B cell (primary cell): ENCODE measurements at regions of chr10 and their contacts with region 1.

Region 1: DNA sequence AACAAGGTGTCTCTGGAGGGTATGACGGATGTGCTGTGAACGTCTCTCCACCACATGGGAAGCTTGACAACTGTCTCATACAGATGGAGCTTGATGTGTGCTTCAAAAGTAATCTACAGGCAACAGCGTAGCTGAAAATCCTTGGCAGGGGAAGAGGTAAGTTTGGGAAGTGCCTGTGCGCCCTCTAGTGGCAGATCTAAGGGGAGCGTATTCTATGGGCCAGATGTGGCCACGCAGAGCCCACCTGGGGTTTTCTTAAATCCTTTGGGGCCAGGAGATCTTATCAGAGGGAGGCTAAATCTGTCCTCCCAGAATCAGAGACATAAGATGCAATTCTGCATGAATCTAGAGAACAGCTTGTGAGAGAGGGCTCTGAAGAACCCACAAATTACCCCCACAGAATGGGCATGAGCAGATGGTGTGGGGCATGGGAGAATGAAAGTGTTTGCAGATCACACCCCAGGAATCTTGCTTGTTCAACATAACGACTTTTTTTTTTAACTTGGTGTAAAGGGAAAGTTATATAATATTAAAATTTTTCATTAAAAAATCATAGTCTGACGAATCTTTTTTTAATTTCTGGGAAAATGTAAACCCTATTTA is 91.2 kb upstream of the MPP7 start:
- DNase-seq: peak; percentile 73
- ATAC-seq: peak; percentile 66
- H3K4me3 ChIP-seq: no peak overlapping the region
- H3K4me3 Mint-ChIP-seq: no peak overlapping the region
- H3K27ac ChIP-seq: no peak overlapping the region
- H3K27ac Mint-ChIP-seq: no peak overlapping the region
- H3K4me1 ChIP-seq: peaks cover 0 to 5% of the 10 kb centered on the region in 2 donors
- H3K4me1 Mint-ChIP-seq: peaks cover 4% of the 10 kb centered on the region
- H3K27me3 ChIP-seq: no peaks in the 10 kb centered on the region
- H3K27me3 Mint-ChIP-seq: peaks cover 4% of the 10 kb centered on the region
- CTCF ChIP-seq: peak; percentile 97

Region 2: DNA sequence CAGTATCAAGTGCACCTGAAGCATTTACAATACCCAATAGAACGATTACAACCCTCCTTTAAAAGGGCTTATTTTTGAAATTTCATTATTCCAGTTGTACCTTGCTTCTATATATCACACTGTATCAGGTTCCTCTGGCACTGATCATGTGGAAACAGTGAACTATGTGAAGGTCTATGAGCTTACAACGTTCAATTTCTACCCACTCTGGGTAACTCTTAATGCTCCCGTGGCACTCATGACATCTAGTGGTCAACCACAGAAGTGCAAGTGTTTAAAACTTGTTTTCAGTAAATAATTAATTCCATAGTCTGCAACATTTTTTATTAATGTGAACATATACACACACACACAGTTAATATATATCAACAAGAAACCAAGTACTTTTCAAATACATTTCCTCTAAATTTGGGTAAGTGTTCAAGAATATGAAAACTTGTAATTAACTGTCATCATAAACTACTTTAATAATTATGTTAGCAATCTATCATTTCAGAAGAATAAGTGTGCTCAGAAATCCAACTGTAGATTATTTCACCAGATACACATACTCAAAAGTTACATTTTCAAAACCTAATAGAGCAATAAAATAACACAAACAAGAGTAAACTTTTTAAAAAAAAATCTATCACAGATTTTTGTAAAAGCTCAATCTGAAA is 152.2 kb before region 1 on chr10:
- CTCF ChIA-PET with region 1: interaction called, 22 read pairs
- POLR2A ChIA-PET with region 1: no interaction called
- intact Hi-C with region 1: no loop called
- DNase-seq: peak; percentile 58
- ATAC-seq: peak; percentile 64
- H3K4me3 ChIP-seq: no peak overlapping the region
- H3K4me3 Mint-ChIP-seq: no peak overlapping the region
- H3K27ac ChIP-seq: no peak overlapping the region
- H3K27ac Mint-ChIP-seq: no peak overlapping the region
- H3K4me1 ChIP-seq: no peaks in the 10 kb centered on the region
- H3K4me1 Mint-ChIP-seq: peaks cover 2% of the 10 kb centered on the region
- H3K27me3 ChIP-seq: no peaks in the 10 kb centered on the region
- H3K27me3 Mint-ChIP-seq: peaks cover 22% of the 10 kb centered on the region
- CTCF ChIP-seq: peak; percentile 99

Region 3: DNA sequence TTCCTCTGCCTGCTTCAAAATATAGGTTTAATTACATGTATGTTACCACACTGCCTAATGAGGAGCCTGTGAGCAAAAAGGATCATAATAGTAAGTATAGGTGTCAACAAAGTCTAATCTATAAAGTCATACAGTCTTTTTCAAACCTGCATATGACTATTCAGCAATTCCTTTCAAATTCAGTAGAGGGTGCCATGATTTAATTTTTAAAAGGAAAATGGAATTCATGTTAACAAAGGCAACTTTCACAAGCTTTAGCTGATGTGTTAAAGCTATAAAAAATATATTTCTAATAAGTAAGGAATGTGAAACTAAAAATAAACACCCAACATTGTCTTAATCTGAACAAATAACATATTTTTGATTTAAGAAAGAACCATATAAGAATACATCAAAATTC is 143.3 kb before region 1 on chr10:
- CTCF ChIA-PET with region 1: interaction called, 20 read pairs
- POLR2A ChIA-PET with region 1: no interaction called
- intact Hi-C with region 1: no loop called
- DNase-seq: peak; percentile 54
- ATAC-seq: no peak
- H3K4me3 ChIP-seq: no peak overlapping the region
- H3K4me3 Mint-ChIP-seq: no peak overlapping the region
- H3K27ac ChIP-seq: no peak overlapping the region
- H3K27ac Mint-ChIP-seq: no peak overlapping the region
- H3K4me1 ChIP-seq: no peaks in the 10 kb centered on the region
- H3K4me1 Mint-ChIP-seq: peaks cover 2% of the 10 kb centered on the region
- H3K27me3 ChIP-seq: peaks cover 0 to 2% (median 0%) of the 10 kb centered on the region in 4 experiments
- H3K27me3 Mint-ChIP-seq: peaks cover 20% of the 10 kb centered on the region
- CTCF ChIP-seq: peak; percentile 71

Region 4: GRCh38 chr10:28263136-28263820 is 130.8 kb before region 1 on chr10:
- CTCF ChIA-PET with region 1: interaction called, 10 read pairs
- POLR2A ChIA-PET with region 1: no interaction called
- intact Hi-C with region 1: no loop called
- DNase-seq: no peak
- ATAC-seq: no peak
- H3K4me3 ChIP-seq: no peak overlapping the region
- H3K4me3 Mint-ChIP-seq: no peak overlapping the region
- H3K27ac ChIP-seq: no peak overlapping the region
- H3K27ac Mint-ChIP-seq: no peak overlapping the region
- H3K4me1 ChIP-seq: peaks cover 25 to 26% of the 10 kb centered on the region in 2 donors
- H3K4me1 Mint-ChIP-seq: peaks cover 37% of the 10 kb centered on the region
- H3K27me3 ChIP-seq: no peaks in the 10 kb centered on the region
- H3K27me3 Mint-ChIP-seq: no peaks in the 10 kb centered on the region
- CTCF ChIP-seq: no peak

Region 5: DNA sequence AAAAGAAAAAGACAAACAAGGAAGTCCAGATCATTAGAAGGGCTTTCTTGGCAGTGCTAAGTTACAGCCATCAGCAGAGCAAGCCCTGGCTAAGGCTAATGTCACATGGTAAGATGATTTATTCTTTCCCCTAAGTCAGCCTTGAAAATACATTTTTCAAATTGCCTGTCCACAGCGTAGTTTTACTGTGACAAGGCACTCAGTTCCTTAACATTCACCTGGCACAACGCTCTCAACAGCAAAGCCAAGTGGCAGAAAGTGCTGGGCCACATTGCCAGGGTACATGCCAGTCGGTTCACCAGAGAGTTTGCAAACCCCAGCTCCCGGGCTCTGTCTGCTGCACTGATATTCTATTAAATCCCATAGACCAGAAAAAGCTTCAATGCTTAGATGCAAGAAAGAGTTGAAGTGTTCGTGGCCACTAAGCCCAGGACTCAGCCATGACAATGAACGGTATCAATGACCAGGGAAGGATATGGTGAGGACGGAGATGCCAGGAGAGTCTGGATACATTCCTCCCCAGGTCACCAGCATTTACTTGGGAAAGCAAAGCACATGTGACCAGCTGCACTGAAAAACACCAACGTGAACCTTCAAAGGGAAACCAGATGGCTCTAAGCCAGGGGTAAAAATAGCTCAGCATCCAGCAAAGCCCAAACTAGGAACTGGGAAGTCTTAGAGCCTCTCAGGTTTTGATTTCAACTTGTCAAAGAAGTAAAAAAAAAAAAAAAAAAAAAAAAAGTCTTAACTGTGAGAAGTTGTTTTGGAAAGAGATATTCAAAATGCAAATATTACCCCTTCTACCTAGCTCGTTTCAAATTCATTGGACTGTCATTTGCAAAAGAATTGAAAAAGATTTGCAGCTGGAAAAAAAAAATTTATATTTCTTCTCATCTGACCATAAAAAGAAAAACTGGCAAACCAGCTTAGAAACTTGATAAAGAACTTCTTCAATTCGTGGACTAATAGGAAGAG is 67.3 kb before region 1 on chr10:
- CTCF ChIA-PET with region 1: interaction called, 11 read pairs
- POLR2A ChIA-PET with region 1: no interaction called
- intact Hi-C with region 1: no loop called
- DNase-seq: no peak
- ATAC-seq: no peak
- H3K4me3 ChIP-seq: no peak overlapping the region
- H3K4me3 Mint-ChIP-seq: no peak overlapping the region
- H3K27ac ChIP-seq: no peak overlapping the region
- H3K27ac Mint-ChIP-seq: peak overlapping the region; percentile 11
- H3K4me1 ChIP-seq: peaks cover 0 to 10% of the 10 kb centered on the region in 2 donors
- H3K4me1 Mint-ChIP-seq: peaks cover 19% of the 10 kb centered on the region
- H3K27me3 ChIP-seq: peaks cover 0 to 5% (median 0%) of the 10 kb centered on the region in 4 experiments
- H3K27me3 Mint-ChIP-seq: peaks cover 4% of the 10 kb centered on the region
- CTCF ChIP-seq: no peak

Region 6: GRCh38 chr10:28367929-28368484 is 26.1 kb before region 1 on chr10:
- CTCF ChIA-PET with region 1: interaction called, 11 read pairs
- POLR2A ChIA-PET with region 1: no interaction called
- intact Hi-C with region 1: no loop called
- DNase-seq: peak; percentile 85
- ATAC-seq: peak; percentile 98
- H3K4me3 ChIP-seq: peak overlapping the region in 1 of 5 experiments; percentile 9
- H3K4me3 Mint-ChIP-seq: peak overlapping the region; percentile 66
- H3K27ac ChIP-seq: peak overlapping the region; percentile 78 to 84
- H3K27ac Mint-ChIP-seq: peak overlapping the region; percentile 90
- H3K4me1 ChIP-seq: peaks cover 38 to 46% of the 10 kb centered on the region in 2 donors
- H3K4me1 Mint-ChIP-seq: peaks cover 33% of the 10 kb centered on the region
- H3K27me3 ChIP-seq: no peaks in the 10 kb centered on the region
- H3K27me3 Mint-ChIP-seq: no peaks in the 10 kb centered on the region
- CTCF ChIP-seq: no peak

Region 7: GRCh38 chr10:28520346-28520745 is 126.3 kb after region 1 on chr10:
- CTCF ChIA-PET with region 1: no interaction called
- POLR2A ChIA-PET with region 1: no interaction called
- intact Hi-C with region 1: no loop called
- DNase-seq: no peak
- ATAC-seq: no peak
- H3K4me3 ChIP-seq: no peak overlapping the region
- H3K4me3 Mint-ChIP-seq: no peak overlapping the region
- H3K27ac ChIP-seq: no peak overlapping the region
- H3K27ac Mint-ChIP-seq: no peak overlapping the region
- H3K4me1 ChIP-seq: no peaks in the 10 kb centered on the region
- H3K4me1 Mint-ChIP-seq: no peaks in the 10 kb centered on the region
- H3K27me3 ChIP-seq: no peaks in the 10 kb centered on the region
- H3K27me3 Mint-ChIP-seq: no peaks in the 10 kb centered on the region
- CTCF ChIP-seq: no peak